Gastrocnemius medialis (tissue), 4 donors: ENCODE measurements at regions of chr9 and their contacts with region 1.

Region 1: GRCh38 chr9:105457560-105458294 is 9.9 kb downstream of the FSD1L start:
- DNase-seq: peak; percentile 62 to 88
- ATAC-seq: peak; percentile 88 to 89
- H3K4me3 ChIP-seq: peak overlapping the region; percentile 50 to 55 (median 52)
- H3K27ac ChIP-seq: peak overlapping the region; percentile 83 to 88 (median 86)
- H3K4me1 ChIP-seq: peaks cover 35 to 43% of the 10 kb centered on the region in 2 donors
- H3K27me3 ChIP-seq: no peaks in the 10 kb centered on the region
- CTCF ChIP-seq: no peak
- POLR2A ChIP-seq: peak in 1 of 2 donors; percentile 51

Region 2: DNA sequence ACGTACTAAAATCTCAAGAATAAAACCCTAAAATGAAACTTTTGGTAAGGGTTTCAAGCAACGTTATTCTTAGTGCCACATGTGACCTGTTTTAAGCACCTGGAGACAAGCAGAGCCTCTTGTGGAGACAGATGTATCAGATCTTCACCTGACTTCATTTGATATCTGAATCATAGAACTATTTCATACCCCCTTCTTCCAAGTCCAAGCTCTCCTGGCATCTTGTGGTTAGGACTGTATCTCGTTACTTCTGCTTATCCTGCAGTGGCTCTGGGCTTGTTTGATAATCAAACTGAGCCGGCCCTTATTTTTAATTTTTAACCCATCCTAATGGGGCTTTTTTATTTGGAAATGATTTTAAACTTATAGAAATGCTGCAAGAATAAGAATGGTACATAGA is 20.9 kb before region 1 on chr9:
- in situ Hi-C with region 1: no loop called
- intact Hi-C with region 1: loop called (anchors 1 kb)
- DNase-seq: peak in 1 of 2 donors; percentile 43
- ATAC-seq: peak; percentile 75 to 86
- H3K4me3 ChIP-seq: no peak overlapping the region
- H3K27ac ChIP-seq: peak overlapping the region; percentile 78 to 95 (median 93)
- H3K4me1 ChIP-seq: peaks cover 57 to 59% of the 10 kb centered on the region in 2 donors
- H3K27me3 ChIP-seq: no peaks in the 10 kb centered on the region
- CTCF ChIP-seq: no peak
- POLR2A ChIP-seq: no peak

Region 3: DNA sequence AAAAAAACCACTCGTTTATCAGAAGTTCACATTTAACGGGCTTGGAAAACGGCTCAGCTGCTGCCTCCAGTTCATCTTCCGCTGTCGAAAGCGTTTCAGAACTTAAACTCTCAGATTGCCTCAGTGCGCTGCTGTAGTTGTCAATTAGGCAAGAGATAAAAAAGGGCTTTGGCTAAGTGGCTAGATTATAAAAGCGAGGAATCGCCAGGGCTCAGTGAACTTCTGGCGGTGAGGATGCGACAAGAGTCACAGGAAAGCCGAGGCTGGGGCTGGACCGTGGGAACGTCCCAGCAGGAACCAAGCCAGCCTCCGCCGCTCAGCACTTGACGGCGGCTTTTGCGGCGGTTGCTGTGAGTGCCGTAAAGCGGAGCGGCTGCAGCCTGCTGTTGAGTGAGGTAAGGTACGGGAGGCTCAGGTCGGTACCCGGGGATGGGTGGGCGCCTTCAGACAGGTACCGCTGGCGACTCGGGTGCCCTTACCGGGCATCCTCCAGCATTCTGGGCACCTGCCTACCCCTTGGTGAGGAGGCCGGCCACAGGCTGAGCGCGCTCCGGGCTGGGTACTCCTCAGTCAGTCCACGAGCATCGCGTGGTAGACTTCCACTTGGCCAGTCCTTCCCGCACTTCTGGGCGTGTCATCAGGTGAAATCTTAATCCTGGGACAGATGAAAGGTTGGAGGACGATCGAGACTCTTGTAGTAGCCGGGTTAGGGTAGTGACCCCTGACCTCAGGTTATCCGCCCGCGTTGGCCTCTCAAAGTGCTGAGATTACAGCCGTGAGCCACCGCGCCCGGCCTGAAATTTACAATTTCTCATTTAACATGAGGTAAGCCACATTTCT is 100.3 kb after region 1 on chr9 and contains the start of gene FKTN:
- in situ Hi-C with region 1: loop called in 1 of 4 experiments (anchors 25 kb)
- intact Hi-C with region 1: no loop called
- DNase-seq: peak; percentile 78 to 86
- ATAC-seq: peak; percentile 99 to 100
- H3K4me3 ChIP-seq: peak within 1 kb of the TSS; percentile 70 to 98 (median 90)
- H3K27ac ChIP-seq: peak within 1 kb of the TSS; percentile 73 to 84 (median 80)
- H3K4me1 ChIP-seq: peaks cover 6 to 19% of the 10 kb centered on the region in 2 donors
- H3K27me3 ChIP-seq: no peaks in the 10 kb centered on the region
- CTCF ChIP-seq: no peak
- POLR2A ChIP-seq: no peak
- total RNA-seq, gene FKTN: 3.2 to 7.7 (median 6.1) TPM

Region 4: DNA sequence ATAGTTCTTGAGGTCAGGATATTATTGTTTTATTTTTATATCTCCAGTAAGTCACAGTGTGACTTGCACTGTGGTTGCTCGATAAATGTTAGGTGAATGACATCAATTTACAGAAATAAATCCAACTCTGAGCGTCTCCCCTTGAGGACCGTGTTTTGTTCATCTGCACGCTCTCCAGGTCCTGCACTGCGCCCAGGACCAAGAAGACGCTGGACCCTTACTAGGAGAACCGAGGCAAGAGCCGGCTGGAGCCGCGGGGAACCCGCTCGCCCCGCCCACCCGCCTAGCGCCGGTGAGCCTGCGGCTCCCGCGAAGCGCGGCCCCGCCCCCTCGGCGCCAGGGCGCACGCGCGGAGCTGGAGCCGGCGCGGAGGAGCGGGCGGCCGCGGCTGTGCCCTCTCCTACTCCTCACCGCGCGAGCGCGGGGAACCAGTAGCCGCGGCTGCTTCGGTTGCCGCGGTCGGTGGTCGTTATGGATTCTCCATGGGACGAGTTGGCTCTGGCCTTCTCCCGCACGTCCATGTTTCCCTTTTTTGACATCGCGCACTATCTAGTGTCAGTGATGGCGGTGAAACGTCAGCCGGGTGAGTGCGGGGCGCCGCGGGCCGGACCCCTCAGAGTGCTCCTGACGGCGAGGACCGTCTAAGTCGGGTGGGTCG is 236.6 kb after region 1 on chr9 and contains the start of gene TMEM38B:
- in situ Hi-C with region 1: loop called in 1 of 4 experiments (anchors 25 kb)
- intact Hi-C with region 1: no loop called
- DNase-seq: peak; percentile 78 to 87
- ATAC-seq: peak; percentile 64 to 65
- H3K4me3 ChIP-seq: peak within 1 kb of the TSS; percentile 73 to 91 (median 82)
- H3K27ac ChIP-seq: peak within 1 kb of the TSS; percentile 93 to 99 (median 96)
- H3K4me1 ChIP-seq: peaks cover 48 to 58% of the 10 kb centered on the region in 2 donors
- H3K27me3 ChIP-seq: no peaks in the 10 kb centered on the region
- CTCF ChIP-seq: no peak
- POLR2A ChIP-seq: peak; percentile 97 to 99
- total RNA-seq, gene TMEM38B: 81.4 to 97.6 (median 89.8) TPM

Region 5: GRCh38 chr9:105822814-105823213 is 365.1 kb after region 1 on chr9:
- in situ Hi-C with region 1: no loop called
- intact Hi-C with region 1: no loop called
- DNase-seq: no peak
- ATAC-seq: no peak
- H3K4me3 ChIP-seq: no peak overlapping the region
- H3K27ac ChIP-seq: no peak overlapping the region
- H3K4me1 ChIP-seq: no peaks in the 10 kb centered on the region
- H3K27me3 ChIP-seq: no peaks in the 10 kb centered on the region
- CTCF ChIP-seq: no peak
- POLR2A ChIP-seq: no peak